ENCODE measurements at regions of chr17 and their contacts with region 1.

Region 1: GRCh38 chr17:8383143-8383822 is at the start of gene RPL26:
- DNase-seq: peak; percentile 88 to 98 (median 95)
- ATAC-seq: peak; percentile 89
- H3K4me3 ChIP-seq: peak within 1 kb of the TSS; percentile 70 to 72
- H3K4me3 Mint-ChIP-seq: peak within 1 kb of the TSS; percentile 96
- H3K27ac ChIP-seq: peak within 1 kb of the TSS; percentile 71 to 76
- H3K27ac Mint-ChIP-seq: peak within 1 kb of the TSS; percentile 93
- H3K4me1 ChIP-seq: peaks cover 40% of the 10 kb centered on the region
- H3K4me1 Mint-ChIP-seq: peaks cover 69% of the 10 kb centered on the region
- H3K27me3 ChIP-seq: no peaks in the 10 kb centered on the region
- H3K27me3 Mint-ChIP-seq: no peaks in the 10 kb centered on the region
- CTCF ChIP-seq: peak; percentile 100
- total RNA-seq, gene RPL26: 2,888 to 2,889 TPM

Region 2: GRCh38 chr17:7931709-7932482 is 451.4 kb before region 1 on chr17 and contains the starts of genes CNTROB and TRAPPC1:
- CTCF ChIA-PET with region 1: no interaction called
- POLR2A ChIA-PET with region 1: no interaction called
- intact Hi-C with region 1: loop called in 1 of 2 experiments (anchors 10 kb)
- DNase-seq: peak; percentile 99 to 100 (median 99)
- ATAC-seq: peak; percentile 93
- H3K4me3 ChIP-seq: peak within 1 kb of the TSS; percentile 96
- H3K4me3 Mint-ChIP-seq: peak within 1 kb of the TSS; percentile 100
- H3K27ac ChIP-seq: peak within 1 kb of the TSS; percentile 85
- H3K27ac Mint-ChIP-seq: peak within 1 kb of the TSS; percentile 99
- H3K4me1 ChIP-seq: peaks cover 22% of the 10 kb centered on the region
- H3K4me1 Mint-ChIP-seq: peaks cover 50% of the 10 kb centered on the region
- H3K27me3 ChIP-seq: no peaks in the 10 kb centered on the region
- H3K27me3 Mint-ChIP-seq: no peaks in the 10 kb centered on the region
- CTCF ChIP-seq: no peak
- total RNA-seq, gene CNTROB: 20.1 to 23.6 TPM
- total RNA-seq, gene TRAPPC1: 29.6 to 39.4 TPM

Region 3: GRCh38 chr17:8156246-8156992 is 226.9 kb before region 1 on chr17:
- CTCF ChIA-PET with region 1: no interaction called
- POLR2A ChIA-PET with region 1: no interaction called
- intact Hi-C with region 1: no loop called
- DNase-seq: peak; percentile 100
- ATAC-seq: peak; percentile 68
- H3K4me3 ChIP-seq: peak overlapping the region; percentile 82 to 90
- H3K4me3 Mint-ChIP-seq: no peak overlapping the region
- H3K27ac ChIP-seq: peak overlapping the region; percentile 100
- H3K27ac Mint-ChIP-seq: no peak overlapping the region
- H3K4me1 ChIP-seq: peaks cover 77% of the 10 kb centered on the region
- H3K4me1 Mint-ChIP-seq: peaks cover 68% of the 10 kb centered on the region
- H3K27me3 ChIP-seq: no peaks in the 10 kb centered on the region
- H3K27me3 Mint-ChIP-seq: no peaks in the 10 kb centered on the region
- CTCF ChIP-seq: no peak

Region 4: GRCh38 chr17:8409966-8410864 is 26.9 kb after region 1 on chr17:
- CTCF ChIA-PET with region 1: interaction called, 7 read pairs
- POLR2A ChIA-PET with region 1: no interaction called
- intact Hi-C with region 1: loop called in 1 of 2 experiments (anchors 1 kb)
- DNase-seq: peak; percentile 47 to 88 (median 82)
- ATAC-seq: peak; percentile 92
- H3K4me3 ChIP-seq: no peak overlapping the region
- H3K4me3 Mint-ChIP-seq: no peak overlapping the region
- H3K27ac ChIP-seq: no peak overlapping the region
- H3K27ac Mint-ChIP-seq: no peak overlapping the region
- H3K4me1 ChIP-seq: peaks cover 3% of the 10 kb centered on the region
- H3K4me1 Mint-ChIP-seq: peaks cover 12% of the 10 kb centered on the region
- H3K27me3 ChIP-seq: peaks cover 0 to 3% of the 10 kb centered on the region in 2 experiments
- H3K27me3 Mint-ChIP-seq: peaks cover 9% of the 10 kb centered on the region
- CTCF ChIP-seq: peak; percentile 86

Region 5: DNA sequence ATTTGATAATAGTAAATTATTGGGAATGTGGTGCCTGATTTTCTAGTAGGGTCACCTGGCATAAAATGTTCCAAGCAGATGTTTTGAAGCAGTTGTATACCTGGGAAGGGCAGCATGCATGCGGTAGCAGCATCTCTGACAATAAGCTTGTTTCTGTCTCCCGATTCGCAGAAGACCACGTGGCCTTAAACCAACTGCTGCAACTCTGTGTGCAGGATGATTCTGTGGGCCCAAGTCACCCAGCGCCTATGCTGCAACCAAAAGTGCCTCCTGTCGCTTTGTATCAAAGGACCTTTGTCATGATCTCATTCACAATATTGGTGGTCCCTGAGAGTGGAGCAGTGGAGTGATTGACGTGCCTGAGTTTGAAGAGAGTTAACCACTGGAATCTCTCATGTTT is 60.5 kb after region 1 on chr17:
- CTCF ChIA-PET with region 1: no interaction called
- POLR2A ChIA-PET with region 1: no interaction called
- intact Hi-C with region 1: no loop called
- DNase-seq: no peak
- ATAC-seq: no peak
- H3K4me3 ChIP-seq: no peak overlapping the region
- H3K4me3 Mint-ChIP-seq: no peak overlapping the region
- H3K27ac ChIP-seq: no peak overlapping the region
- H3K27ac Mint-ChIP-seq: no peak overlapping the region
- H3K4me1 ChIP-seq: peaks cover 39% of the 10 kb centered on the region
- H3K4me1 Mint-ChIP-seq: peaks cover 58% of the 10 kb centered on the region
- H3K27me3 ChIP-seq: no peaks in the 10 kb centered on the region
- H3K27me3 Mint-ChIP-seq: no peaks in the 10 kb centered on the region
- CTCF ChIP-seq: no peak

Region 6: DNA sequence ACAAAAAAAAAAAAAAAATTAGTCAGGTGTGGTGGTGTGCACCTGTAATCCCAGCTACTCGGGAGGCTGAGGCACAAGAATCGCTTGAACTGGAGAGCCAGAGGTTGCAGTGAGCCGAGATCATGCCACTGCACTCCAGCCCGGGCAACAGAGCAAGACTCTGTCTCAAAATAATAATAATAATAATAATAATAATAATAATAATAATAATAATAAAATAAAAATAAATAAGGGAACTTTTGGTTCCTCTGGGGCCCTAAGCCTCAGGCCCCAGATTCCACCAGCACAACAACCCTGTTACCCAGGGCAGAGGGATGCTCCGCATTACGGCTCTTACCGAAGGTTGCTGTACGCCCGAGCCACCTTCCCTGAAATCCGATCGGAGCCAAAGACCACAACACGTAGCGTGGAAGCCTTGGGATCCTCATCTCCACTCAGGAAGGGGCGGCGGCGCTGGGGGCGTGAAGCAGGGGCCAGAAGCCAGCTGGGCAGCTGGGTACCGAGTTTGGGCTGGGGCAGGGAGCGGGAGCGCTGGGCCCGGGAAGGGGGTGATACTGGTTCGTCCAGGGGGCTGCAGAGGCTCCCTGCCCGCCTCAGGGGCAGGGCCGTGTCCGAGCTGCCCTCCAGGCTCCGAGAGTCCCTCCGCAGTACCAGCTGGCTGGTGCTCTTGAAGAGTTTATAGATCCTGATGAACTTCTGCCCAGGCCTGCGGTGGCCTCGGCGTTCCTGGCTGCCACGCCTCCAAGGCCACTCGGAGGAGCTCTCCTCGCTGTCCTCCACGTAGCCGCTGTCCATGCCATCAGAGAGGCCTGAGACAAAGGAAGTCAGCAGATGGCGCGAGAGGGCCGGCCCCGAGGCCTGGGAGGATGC is 504.8 kb after region 1 on chr17:
- CTCF ChIA-PET with region 1: no interaction called
- POLR2A ChIA-PET with region 1: no interaction called
- intact Hi-C with region 1: loop called in 1 of 2 experiments (anchors 10 kb)
- DNase-seq: peak in 1 of 9 experiments; percentile 9
- ATAC-seq: no peak
- H3K4me3 ChIP-seq: no peak overlapping the region
- H3K4me3 Mint-ChIP-seq: no peak overlapping the region
- H3K27ac ChIP-seq: no peak overlapping the region
- H3K27ac Mint-ChIP-seq: no peak overlapping the region
- H3K4me1 ChIP-seq: no peaks in the 10 kb centered on the region
- H3K4me1 Mint-ChIP-seq: peaks cover 5% of the 10 kb centered on the region
- H3K27me3 ChIP-seq: no peaks in the 10 kb centered on the region
- H3K27me3 Mint-ChIP-seq: no peaks in the 10 kb centered on the region
- CTCF ChIP-seq: no peak

Region 7: GRCh38 chr17:8991514-8992285 is 608.4 kb after region 1 on chr17:
- CTCF ChIA-PET with region 1: no interaction called
- POLR2A ChIA-PET with region 1: no interaction called
- intact Hi-C with region 1: loop called in 1 of 2 experiments (anchors 10 kb)
- DNase-seq: peak; percentile 31 to 81 (median 71)
- ATAC-seq: peak; percentile 80
- H3K4me3 ChIP-seq: no peak overlapping the region
- H3K4me3 Mint-ChIP-seq: no peak overlapping the region
- H3K27ac ChIP-seq: no peak overlapping the region
- H3K27ac Mint-ChIP-seq: no peak overlapping the region
- H3K4me1 ChIP-seq: peaks cover 9% of the 10 kb centered on the region
- H3K4me1 Mint-ChIP-seq: peaks cover 7% of the 10 kb centered on the region
- H3K27me3 ChIP-seq: no peaks in the 10 kb centered on the region
- H3K27me3 Mint-ChIP-seq: no peaks in the 10 kb centered on the region
- CTCF ChIP-seq: peak; percentile 73